B cell (primary cell): ENCODE measurements at regions of chr11 and their contacts with region 1.

Region 1: GRCh38 chr11:22829231-22830081 is at the start of gene SVIP:
- DNase-seq: peak; percentile 93
- ATAC-seq: peak; percentile 97
- H3K4me3 ChIP-seq: peak within 1 kb of the TSS; percentile 63 to 97 (median 85)
- H3K4me3 Mint-ChIP-seq: peak within 1 kb of the TSS; percentile 94
- H3K27ac ChIP-seq: peak within 1 kb of the TSS; percentile 79 to 80
- H3K27ac Mint-ChIP-seq: peak within 1 kb of the TSS; percentile 89
- H3K4me1 ChIP-seq: peaks cover 9 to 13% of the 10 kb centered on the region in 2 donors
- H3K4me1 Mint-ChIP-seq: peaks cover 11% of the 10 kb centered on the region
- H3K27me3 ChIP-seq: no peaks in the 10 kb centered on the region
- H3K27me3 Mint-ChIP-seq: no peaks in the 10 kb centered on the region
- CTCF ChIP-seq: peak; percentile 73
- total RNA-seq, gene SVIP: 18.3 and 20.4 TPM in 2 replicates

Region 2: GRCh38 chr11:22625448-22626287 is 203.8 kb before region 1 on chr11 and contains the start of gene FANCF:
- CTCF ChIA-PET with region 1: interaction called, 7 read pairs
- POLR2A ChIA-PET with region 1: no interaction called
- intact Hi-C with region 1: loop called (anchors 1 kb)
- DNase-seq: peak; percentile 100
- ATAC-seq: peak; percentile 92
- H3K4me3 ChIP-seq: peak within 1 kb of the TSS; percentile 78 to 99 (median 92)
- H3K4me3 Mint-ChIP-seq: peak within 1 kb of the TSS; percentile 99
- H3K27ac ChIP-seq: peak within 1 kb of the TSS; percentile 86 to 92
- H3K27ac Mint-ChIP-seq: peak within 1 kb of the TSS; percentile 99
- H3K4me1 ChIP-seq: peaks cover 27% of the 10 kb centered on the region in 2 donors
- H3K4me1 Mint-ChIP-seq: peaks cover 42% of the 10 kb centered on the region
- H3K27me3 ChIP-seq: no peaks in the 10 kb centered on the region
- H3K27me3 Mint-ChIP-seq: no peaks in the 10 kb centered on the region
- CTCF ChIP-seq: no peak
- total RNA-seq, gene FANCF: 26.6 TPM in 2 replicates

Region 3: GRCh38 chr11:22875869-22876473 is 46.5 kb after region 1 on chr11:
- CTCF ChIA-PET with region 1: interaction called, 10 read pairs
- POLR2A ChIA-PET with region 1: no interaction called
- intact Hi-C with region 1: loop called (anchors 2 kb)
- DNase-seq: peak; percentile 79
- ATAC-seq: peak; percentile 86
- H3K4me3 ChIP-seq: no peak overlapping the region
- H3K4me3 Mint-ChIP-seq: no peak overlapping the region
- H3K27ac ChIP-seq: no peak overlapping the region
- H3K27ac Mint-ChIP-seq: no peak overlapping the region
- H3K4me1 ChIP-seq: no peaks in the 10 kb centered on the region
- H3K4me1 Mint-ChIP-seq: no peaks in the 10 kb centered on the region
- H3K27me3 ChIP-seq: no peaks in the 10 kb centered on the region
- H3K27me3 Mint-ChIP-seq: no peaks in the 10 kb centered on the region
- CTCF ChIP-seq: peak; percentile 96

Region 4: GRCh38 chr11:22898036-22898435 is 68.6 kb after region 1 on chr11:
- CTCF ChIA-PET with region 1: no interaction called
- POLR2A ChIA-PET with region 1: no interaction called
- intact Hi-C with region 1: no loop called
- DNase-seq: no peak
- ATAC-seq: no peak
- H3K4me3 ChIP-seq: no peak overlapping the region
- H3K4me3 Mint-ChIP-seq: no peak overlapping the region
- H3K27ac ChIP-seq: no peak overlapping the region
- H3K27ac Mint-ChIP-seq: no peak overlapping the region
- H3K4me1 ChIP-seq: no peaks in the 10 kb centered on the region
- H3K4me1 Mint-ChIP-seq: no peaks in the 10 kb centered on the region
- H3K27me3 ChIP-seq: no peaks in the 10 kb centered on the region
- H3K27me3 Mint-ChIP-seq: no peaks in the 10 kb centered on the region
- CTCF ChIP-seq: no peak

Region 5: DNA sequence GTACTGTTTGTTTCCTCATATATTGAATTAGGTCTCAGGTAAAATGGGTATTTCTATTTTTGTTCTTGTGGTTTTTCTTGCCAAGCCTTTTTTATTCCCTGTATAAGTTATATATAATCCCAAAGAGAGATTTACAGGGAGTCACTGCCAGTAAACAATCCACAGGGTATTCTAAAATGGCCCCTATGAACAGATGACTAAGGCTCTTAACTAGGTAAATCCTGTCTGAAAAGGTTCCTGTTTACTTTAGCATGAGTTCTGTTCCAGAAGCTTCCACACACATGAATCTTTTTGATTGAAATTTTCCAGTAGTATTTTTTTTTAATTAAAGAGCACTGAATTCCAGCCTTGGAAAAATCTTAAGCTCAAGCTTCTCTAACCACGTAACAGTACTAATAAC is 583.6 kb after region 1 on chr11:
- CTCF ChIA-PET with region 1: no interaction called
- POLR2A ChIA-PET with region 1: no interaction called
- intact Hi-C with region 1: no loop called
- DNase-seq: no peak
- ATAC-seq: no peak
- H3K4me3 ChIP-seq: no peak overlapping the region
- H3K4me3 Mint-ChIP-seq: no peak overlapping the region
- H3K27ac ChIP-seq: no peak overlapping the region
- H3K27ac Mint-ChIP-seq: no peak overlapping the region
- H3K4me1 ChIP-seq: no peaks in the 10 kb centered on the region
- H3K4me1 Mint-ChIP-seq: no peaks in the 10 kb centered on the region
- H3K27me3 ChIP-seq: no peaks in the 10 kb centered on the region
- H3K27me3 Mint-ChIP-seq: no peaks in the 10 kb centered on the region
- CTCF ChIP-seq: no peak